Gastrocnemius medialis (tissue), 4 donors: ENCODE measurements at regions of chr6 and their contacts with region 1.

Region 1: GRCh38 chr6:15245361-15246216 is at the start of gene JARID2:
- DNase-seq: peak; percentile 99
- ATAC-seq: peak; percentile 79 to 81
- H3K4me3 ChIP-seq: peak within 1 kb of the TSS; percentile 64 to 81 (median 77)
- H3K27ac ChIP-seq: peak within 1 kb of the TSS; percentile 90 to 98 (median 97)
- H3K4me1 ChIP-seq: peaks cover 11 to 27% of the 10 kb centered on the region in 2 donors
- H3K27me3 ChIP-seq: no peaks in the 10 kb centered on the region
- CTCF ChIP-seq: peak in 3 of 5 experiments; percentile 12 to 33 (median 23)
- POLR2A ChIP-seq: peak; percentile 95 to 98
- total RNA-seq, gene JARID2: 11.6 to 22.5 (median 16.4) TPM

Region 2: GRCh38 chr6:14210663-14211561 is 1034.7 kb before region 1 on chr6:
- in situ Hi-C with region 1: loop called in 3 of 4 experiments (anchors 25 kb)
- intact Hi-C with region 1: loop called (anchors 2 kb)
- DNase-seq: peak; percentile 87 to 92
- ATAC-seq: peak; percentile 92 to 94
- H3K4me3 ChIP-seq: peak overlapping the region; percentile 75 to 93 (median 82)
- H3K27ac ChIP-seq: peak overlapping the region; percentile 86 to 89 (median 87)
- H3K4me1 ChIP-seq: peaks cover 12% of the 10 kb centered on the region in 2 donors
- H3K27me3 ChIP-seq: no peaks in the 10 kb centered on the region
- CTCF ChIP-seq: peak; percentile 48 to 99 (median 98)
- POLR2A ChIP-seq: peak; percentile 63 to 78

Region 3: GRCh38 chr6:14876778-14877613 is 368.6 kb before region 1 on chr6:
- in situ Hi-C with region 1: loop called in 1 of 4 experiments (anchors 10 kb)
- intact Hi-C with region 1: no loop called
- DNase-seq: peak in 1 of 2 donors; percentile 48
- ATAC-seq: peak; percentile 91 to 93
- H3K4me3 ChIP-seq: peak overlapping the region in 2 of 4 donors; percentile 14 to 26
- H3K27ac ChIP-seq: peak overlapping the region; percentile 75 to 88 (median 76)
- H3K4me1 ChIP-seq: peaks cover 24 to 46% of the 10 kb centered on the region in 2 donors
- H3K27me3 ChIP-seq: no peaks in the 10 kb centered on the region
- CTCF ChIP-seq: no peak
- POLR2A ChIP-seq: peak in 1 of 2 donors; percentile 44

Region 4: GRCh38 chr6:14921170-14921569 is 324.4 kb before region 1 on chr6:
- in situ Hi-C with region 1: no loop called
- intact Hi-C with region 1: loop called (anchors 2 kb)
- DNase-seq: peak; percentile 60 to 84
- ATAC-seq: peak; percentile 4 to 8
- H3K4me3 ChIP-seq: no peak overlapping the region
- H3K27ac ChIP-seq: peak overlapping the region; percentile 87 to 97 (median 92)
- H3K4me1 ChIP-seq: peaks cover 41 to 55% of the 10 kb centered on the region in 2 donors
- H3K27me3 ChIP-seq: no peaks in the 10 kb centered on the region
- CTCF ChIP-seq: no peak
- POLR2A ChIP-seq: peak in 1 of 2 donors; percentile 23

Region 5: GRCh38 chr6:15062516-15063252 is 182.9 kb before region 1 on chr6:
- in situ Hi-C with region 1: no loop called
- intact Hi-C with region 1: loop called (anchors 2 kb)
- DNase-seq: peak; percentile 55 to 74
- ATAC-seq: peak; percentile 92 to 93
- H3K4me3 ChIP-seq: no peak overlapping the region
- H3K27ac ChIP-seq: peak overlapping the region; percentile 80 to 93 (median 84)
- H3K4me1 ChIP-seq: peaks cover 10 to 17% of the 10 kb centered on the region in 2 donors
- H3K27me3 ChIP-seq: no peaks in the 10 kb centered on the region
- CTCF ChIP-seq: no peak
- POLR2A ChIP-seq: no peak

Region 6: GRCh38 chr6:15160812-15161211 is 84.8 kb before region 1 on chr6:
- in situ Hi-C with region 1: no loop called
- intact Hi-C with region 1: no loop called
- DNase-seq: no peak
- ATAC-seq: no peak
- H3K4me3 ChIP-seq: no peak overlapping the region
- H3K27ac ChIP-seq: no peak overlapping the region
- H3K4me1 ChIP-seq: no peaks in the 10 kb centered on the region
- H3K27me3 ChIP-seq: no peaks in the 10 kb centered on the region
- CTCF ChIP-seq: no peak
- POLR2A ChIP-seq: no peak

Region 7: GRCh38 chr6:15479761-15480160 is 234.2 kb after region 1 on chr6:
- in situ Hi-C with region 1: loop called in 2 of 4 experiments (anchors 25 kb)
- intact Hi-C with region 1: loop called (anchors 5 kb)
- DNase-seq: no peak
- ATAC-seq: no peak
- H3K4me3 ChIP-seq: no peak overlapping the region
- H3K27ac ChIP-seq: peak overlapping the region; percentile 75 to 87 (median 83)
- H3K4me1 ChIP-seq: peaks cover 82 to 92% of the 10 kb centered on the region in 2 donors
- H3K27me3 ChIP-seq: no peaks in the 10 kb centered on the region
- CTCF ChIP-seq: no peak
- POLR2A ChIP-seq: no peak

Region 8: GRCh38 chr6:15621203-15622044 is 375.8 kb after region 1 on chr6:
- in situ Hi-C with region 1: loop called in 2 of 4 experiments (anchors 25 kb)
- intact Hi-C with region 1: loop called (anchors 10 kb)
- DNase-seq: peak; percentile 15 to 40
- ATAC-seq: peak; percentile 59 to 60
- H3K4me3 ChIP-seq: no peak overlapping the region
- H3K27ac ChIP-seq: peak overlapping the region; percentile 72 to 79 (median 76)
- H3K4me1 ChIP-seq: peaks cover 33 to 34% of the 10 kb centered on the region in 2 donors
- H3K27me3 ChIP-seq: no peaks in the 10 kb centered on the region
- CTCF ChIP-seq: no peak
- POLR2A ChIP-seq: no peak

Region 9: GRCh38 chr6:15793288-15793687 is 547.7 kb after region 1 on chr6:
- in situ Hi-C with region 1: no loop called
- intact Hi-C with region 1: no loop called
- DNase-seq: peak; percentile 67 to 75
- ATAC-seq: peak; percentile 94 to 96
- H3K4me3 ChIP-seq: no peak overlapping the region
- H3K27ac ChIP-seq: peak overlapping the region; percentile 65 to 83 (median 78)
- H3K4me1 ChIP-seq: peaks cover 57 to 61% of the 10 kb centered on the region in 2 donors
- H3K27me3 ChIP-seq: no peaks in the 10 kb centered on the region
- CTCF ChIP-seq: no peak
- POLR2A ChIP-seq: no peak